Heart left ventricle (tissue), 16 donors: ENCODE measurements at regions of chr16 and their contacts with region 1.

Region 1: GRCh38 chr16:48156790-48157209 is 1.0 kb upstream of the ABCC12 start:
- DNase-seq: peak; percentile 84 to 90 (median 86)
- ATAC-seq: peak; percentile 79 to 94 (median 84)
- H3K4me3 ChIP-seq: peak overlapping the region in 4 of 12 donors; percentile 10 to 30 (median 24)
- H3K27ac ChIP-seq: peak overlapping the region in 6 of 12 donors; percentile 45 to 64 (median 49)
- H3K4me1 ChIP-seq: peaks cover 0 to 17% (median 6%) of the 10 kb centered on the region in 12 donors
- H3K27me3 ChIP-seq: peaks cover 0 to 3% (median 0%) of the 10 kb centered on the region in 9 donors
- CTCF ChIP-seq: peak; percentile 94 to 99 (median 96)
- POLR2A ChIP-seq: no peak

Region 2: DNA sequence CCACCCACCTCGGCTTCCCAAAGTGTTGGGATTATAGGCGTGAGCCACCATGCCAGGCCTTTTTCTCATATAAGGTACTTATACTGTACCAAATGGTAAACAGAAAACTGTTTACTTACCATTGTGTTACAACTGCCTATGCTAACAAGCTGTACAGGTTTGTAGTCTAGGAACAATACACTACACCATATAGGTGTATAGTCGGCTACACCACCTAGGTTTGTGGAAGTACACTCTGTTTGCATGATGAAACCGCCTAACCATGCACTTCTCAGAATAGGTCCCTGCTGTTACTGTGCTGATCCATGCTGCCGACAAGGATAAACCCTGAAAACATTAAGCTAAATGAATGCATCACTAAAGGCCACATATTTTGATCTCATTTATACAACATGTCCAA is 1202.2 kb before region 1 on chr16:
- intact Hi-C with region 1: loop called in 7 of 10 experiments (anchors 5 to 10 kb)
- DNase-seq: no peak
- ATAC-seq: peak in 1 of 4 donors; percentile 12
- H3K4me3 ChIP-seq: no peak overlapping the region
- H3K27ac ChIP-seq: no peak overlapping the region
- H3K4me1 ChIP-seq: no peaks in the 10 kb centered on the region
- H3K27me3 ChIP-seq: no peaks in the 10 kb centered on the region
- CTCF ChIP-seq: no peak
- POLR2A ChIP-seq: no peak

Region 3: GRCh38 chr16:47258874-47259461 is 897.8 kb before region 1 on chr16:
- intact Hi-C with region 1: loop called in 2 of 10 experiments (anchors 5 to 10 kb)
- DNase-seq: no peak
- ATAC-seq: no peak
- H3K4me3 ChIP-seq: no peak overlapping the region
- H3K27ac ChIP-seq: no peak overlapping the region
- H3K4me1 ChIP-seq: no peaks in the 10 kb centered on the region
- H3K27me3 ChIP-seq: no peaks in the 10 kb centered on the region
- CTCF ChIP-seq: peak; percentile 40 to 69 (median 52)
- POLR2A ChIP-seq: no peak

Region 4: GRCh38 chr16:47713225-47713595 is 443.6 kb before region 1 on chr16:
- intact Hi-C with region 1: loop called in 1 of 10 experiments (anchors 10 kb)
- DNase-seq: no peak
- ATAC-seq: peak in 1 of 4 donors; percentile 48
- H3K4me3 ChIP-seq: no peak overlapping the region
- H3K27ac ChIP-seq: no peak overlapping the region
- H3K4me1 ChIP-seq: no peaks in the 10 kb centered on the region
- H3K27me3 ChIP-seq: peaks cover 0 to 4% (median 0%) of the 10 kb centered on the region in 9 donors
- CTCF ChIP-seq: no peak
- POLR2A ChIP-seq: no peak

Region 5: DNA sequence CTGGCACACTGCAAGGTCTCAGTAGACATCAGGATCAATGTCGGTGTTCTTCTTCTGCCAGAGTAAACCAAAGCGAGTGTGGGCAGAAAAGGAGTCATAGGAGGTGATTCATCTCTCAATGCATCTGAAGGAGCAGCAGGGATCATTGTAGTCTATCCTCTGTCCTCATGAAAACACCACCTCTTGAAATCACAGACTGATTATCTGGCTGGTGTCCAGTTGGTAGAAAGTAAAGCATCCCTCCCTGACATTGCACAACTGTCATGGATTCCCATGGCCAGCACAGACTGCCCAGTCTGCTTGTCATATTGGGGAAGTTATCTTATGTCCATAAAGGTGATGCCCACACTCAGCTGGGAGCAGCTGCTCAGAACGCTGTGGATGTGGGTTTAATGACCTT is 75.1 kb before region 1 on chr16:
- intact Hi-C with region 1: no loop called
- DNase-seq: no peak
- ATAC-seq: no peak
- H3K4me3 ChIP-seq: no peak overlapping the region
- H3K27ac ChIP-seq: no peak overlapping the region
- H3K4me1 ChIP-seq: peaks cover 0 to 6% (median 1%) of the 10 kb centered on the region in 12 donors
- H3K27me3 ChIP-seq: no peaks in the 10 kb centered on the region
- CTCF ChIP-seq: no peak
- POLR2A ChIP-seq: no peak